Dorsolateral prefrontal cortex (tissue), 120 donors: ENCODE measurements at regions of chr9 and their contacts with region 1.

Region 1: DNA sequence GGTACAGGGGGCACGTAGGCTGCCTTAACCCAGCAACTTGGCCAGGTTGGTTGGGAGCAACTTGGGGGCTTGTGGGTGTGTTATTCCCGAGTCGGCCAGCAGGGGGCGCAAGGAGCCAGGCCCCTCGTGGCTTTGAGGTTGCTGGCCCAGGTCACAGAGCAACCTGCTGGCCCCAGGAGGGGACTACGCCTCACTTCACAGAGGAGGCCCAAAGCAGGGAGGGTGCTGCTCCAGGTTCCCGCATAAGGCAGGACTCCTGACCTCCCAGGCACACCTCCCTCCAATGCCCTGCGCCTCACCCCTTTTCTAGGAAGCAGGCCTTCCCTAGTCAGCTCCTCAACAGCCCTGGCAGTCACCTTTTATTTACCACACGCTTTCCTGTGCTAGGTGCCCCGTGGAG is 18.1 kb downstream of the KYAT1 start:
- DNase-seq: peak in 9 of 10 donors; percentile 45 to 78 (median 59)
- H3K4me3 ChIP-seq: no peak overlapping the region
- H3K27ac ChIP-seq: peak overlapping the region in 8 of 59 donors; percentile 4 to 85 (median 25)
- H3K27me3 ChIP-seq: no peaks in the 10 kb centered on the region
- CTCF ChIP-seq: peak; percentile 84 to 98 (median 95)

Region 2: DNA sequence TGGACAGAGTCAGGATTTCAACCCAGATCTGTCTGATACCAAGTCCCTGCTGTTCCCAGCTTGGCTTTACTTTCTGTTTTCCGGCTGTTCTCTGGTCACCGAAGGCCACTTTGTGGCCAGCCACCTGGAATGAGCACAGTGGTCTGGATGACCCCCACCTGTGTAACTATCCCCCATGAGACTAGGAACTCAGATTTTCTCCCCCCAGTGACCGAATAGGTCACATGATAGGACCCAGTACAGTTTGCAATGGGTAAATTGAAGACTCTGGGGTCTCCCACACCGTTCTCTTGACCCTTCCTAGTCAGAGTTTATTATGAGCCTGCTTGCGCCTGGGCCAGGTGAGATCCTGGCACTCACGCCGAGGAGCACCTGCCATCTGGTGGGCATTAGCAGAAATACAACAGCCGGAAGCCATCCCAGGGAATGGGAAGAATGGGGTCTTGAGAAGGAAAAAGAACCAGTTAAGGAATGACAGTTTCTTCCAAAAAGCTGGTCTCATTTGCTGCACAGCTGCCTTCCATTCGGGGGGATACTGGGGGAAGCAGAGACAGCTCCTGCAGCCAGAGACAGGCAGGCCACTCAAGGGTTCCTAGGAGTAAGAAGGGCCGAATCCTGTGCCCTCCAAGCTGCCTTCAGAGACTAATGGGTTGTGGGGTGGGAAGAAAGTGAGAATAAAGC is 64.2 kb after region 1 on chr9:
- intact Hi-C with region 1: loop called (anchors 1 to 5 kb)
- DNase-seq: peak in 8 of 10 donors; percentile 42 to 72 (median 54)
- H3K4me3 ChIP-seq: no peak overlapping the region
- H3K27ac ChIP-seq: peak overlapping the region in 35 of 59 donors; percentile 7 to 67 (median 44)
- H3K27me3 ChIP-seq: no peaks in the 10 kb centered on the region
- CTCF ChIP-seq: peak; percentile 64 to 97 (median 92)

Region 3: DNA sequence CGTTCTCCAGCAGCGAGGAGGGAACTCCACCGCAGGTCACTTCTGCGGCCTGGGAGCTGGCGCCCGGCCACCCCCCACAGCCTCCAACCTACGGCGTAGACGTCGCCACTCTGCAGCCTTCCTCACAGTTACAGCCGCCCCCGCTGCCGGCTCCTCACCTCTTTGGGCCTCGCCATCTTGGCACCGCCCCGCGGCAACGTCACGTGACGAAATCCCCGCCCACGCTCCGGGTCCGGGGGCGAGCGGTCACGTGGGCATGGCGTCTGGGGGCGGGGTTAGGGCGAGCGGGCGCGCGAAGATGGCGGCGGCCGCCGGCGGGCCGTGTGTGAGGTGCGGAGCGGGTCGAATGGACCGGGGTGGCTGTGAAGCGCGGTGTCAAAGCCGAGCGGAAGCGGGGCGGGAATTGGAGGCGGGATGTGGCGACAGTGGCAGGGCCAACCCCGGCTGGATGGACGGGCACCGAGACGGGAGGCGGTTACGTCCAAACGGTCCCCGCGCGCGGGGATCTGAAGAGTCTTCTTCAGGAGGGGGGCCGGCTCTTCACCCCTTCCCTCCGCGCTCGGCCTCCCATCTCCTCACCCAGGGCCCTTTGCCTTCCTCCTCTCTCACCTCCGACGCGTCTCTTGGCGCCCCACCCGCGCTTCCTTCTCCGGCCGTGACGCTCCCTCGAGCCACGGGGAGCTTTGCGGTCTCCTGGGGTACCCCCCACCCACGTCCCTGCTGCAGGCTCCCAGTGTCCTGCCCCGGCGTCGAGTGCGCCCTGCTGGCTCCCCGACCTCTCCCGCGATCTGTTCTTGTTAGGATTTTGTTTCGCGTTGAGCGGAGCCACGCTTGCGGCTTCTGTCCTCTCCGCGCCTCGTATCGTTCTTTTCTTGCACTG is 84.0 kb after region 1 on chr9 and contains the starts of genes DOLK and NUP188:
- intact Hi-C with region 1: no loop called
- DNase-seq: peak; percentile 91 to 99 (median 96)
- H3K4me3 ChIP-seq: peak within 1 kb of the TSS; percentile 63 to 100 (median 92)
- H3K27ac ChIP-seq: peak within 1 kb of the TSS; percentile 52 to 97 (median 92)
- H3K27me3 ChIP-seq: no peaks in the 10 kb centered on the region
- CTCF ChIP-seq: peak in 14 of 56 donors; percentile 11 to 54 (median 25)
- total RNA-seq, gene DOLK: 3.6 to 13.2 (median 8.4) TPM
- total RNA-seq, gene NUP188: 23.7 to 70.4 (median 41.1) TPM